ENCODE measurements at regions of chrX and their contacts with region 1.

Region 1: DNA sequence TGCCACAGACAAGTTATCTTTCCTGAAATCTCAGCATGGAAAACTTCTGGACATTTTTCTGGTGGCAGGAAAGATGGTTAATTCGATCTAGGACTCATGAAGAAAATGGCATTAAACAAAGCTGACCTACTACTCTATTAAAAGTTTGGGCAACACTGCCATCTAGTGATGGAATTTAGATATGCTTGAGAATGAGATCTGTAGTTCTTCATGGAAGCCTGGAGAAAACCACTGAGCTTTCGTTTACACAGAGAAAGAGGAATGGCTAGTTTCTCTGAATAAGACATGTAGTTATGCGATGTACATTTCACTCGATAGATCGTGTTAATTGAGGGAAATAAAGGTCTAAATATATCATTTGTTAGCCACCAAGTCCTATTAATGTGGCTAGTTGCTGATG is 51.7 kb upstream of the CHRDL1 start:
- DNase-seq: peak in 3 of 14 experiments; percentile 44 to 61 (median 52)
- ATAC-seq: no peak
- H3K4me3 ChIP-seq: no peak overlapping the region
- H3K4me3 Mint-ChIP-seq: no peak overlapping the region
- H3K27ac ChIP-seq: no peak overlapping the region
- H3K27ac Mint-ChIP-seq: no peak overlapping the region
- H3K4me1 ChIP-seq: no peaks in the 10 kb centered on the region
- H3K4me1 Mint-ChIP-seq: no peaks in the 10 kb centered on the region
- H3K27me3 ChIP-seq: no peaks in the 10 kb centered on the region
- H3K27me3 Mint-ChIP-seq: no peaks in the 10 kb centered on the region
- CTCF ChIP-seq: peak; percentile 60

Region 2: GRCh38 chrX:110156167-110156754 is 691.1 kb before region 1 on chrX:
- CTCF ChIA-PET with region 1: no interaction called
- POLR2A ChIA-PET with region 1: no interaction called
- intact Hi-C with region 1: loop called in 1 of 2 experiments (anchors 5 kb)
- DNase-seq: peak in 3 of 14 experiments; percentile 13 to 40 (median 29)
- ATAC-seq: no peak
- H3K4me3 ChIP-seq: no peak overlapping the region
- H3K4me3 Mint-ChIP-seq: no peak overlapping the region
- H3K27ac ChIP-seq: no peak overlapping the region
- H3K27ac Mint-ChIP-seq: no peak overlapping the region
- H3K4me1 ChIP-seq: peaks cover 6% of the 10 kb centered on the region
- H3K4me1 Mint-ChIP-seq: peaks cover 10% of the 10 kb centered on the region
- H3K27me3 ChIP-seq: no peaks in the 10 kb centered on the region
- H3K27me3 Mint-ChIP-seq: no peaks in the 10 kb centered on the region
- CTCF ChIP-seq: peak; percentile 64

Region 3: DNA sequence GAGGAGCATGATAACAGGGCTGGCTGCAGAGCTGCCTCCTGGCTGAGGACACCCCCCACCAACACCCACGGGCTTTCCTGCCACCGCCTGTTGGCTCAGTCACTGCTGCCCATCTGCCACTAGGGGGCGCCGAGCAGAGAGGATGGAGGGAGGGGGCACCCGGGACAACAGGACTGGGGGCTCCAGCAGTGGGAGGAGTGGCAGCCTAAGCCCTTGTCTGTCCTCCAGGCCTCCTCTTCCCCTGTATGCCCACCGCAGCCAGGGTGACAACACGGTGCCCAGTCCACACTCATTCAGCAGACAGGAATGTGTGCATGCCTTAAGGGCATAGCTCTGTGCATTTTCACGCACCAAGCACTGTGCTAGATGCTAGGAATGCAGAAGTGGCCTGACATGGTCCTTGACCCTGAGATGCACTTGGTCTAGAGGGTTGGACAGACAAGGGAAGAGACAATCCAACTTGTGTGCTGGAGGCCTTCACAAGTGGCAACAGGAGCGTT is 679.3 kb before region 1 on chrX:
- CTCF ChIA-PET with region 1: no interaction called
- POLR2A ChIA-PET with region 1: no interaction called
- intact Hi-C with region 1: loop called in 1 of 2 experiments (anchors 5 kb)
- DNase-seq: peak; percentile 19 to 66 (median 39)
- ATAC-seq: peak; percentile 46
- H3K4me3 ChIP-seq: no peak overlapping the region
- H3K4me3 Mint-ChIP-seq: no peak overlapping the region
- H3K27ac ChIP-seq: no peak overlapping the region
- H3K27ac Mint-ChIP-seq: no peak overlapping the region
- H3K4me1 ChIP-seq: peaks cover 6% of the 10 kb centered on the region
- H3K4me1 Mint-ChIP-seq: peaks cover 5% of the 10 kb centered on the region
- H3K27me3 ChIP-seq: no peaks in the 10 kb centered on the region
- H3K27me3 Mint-ChIP-seq: no peaks in the 10 kb centered on the region
- CTCF ChIP-seq: peak; percentile 51

Region 4: GRCh38 chrX:110450050-110450449 is 397.3 kb before region 1 on chrX:
- CTCF ChIA-PET with region 1: no interaction called
- POLR2A ChIA-PET with region 1: no interaction called
- intact Hi-C with region 1: loop called (anchors 1 kb)
- DNase-seq: peak; percentile 10 to 64 (median 37)
- ATAC-seq: peak; percentile 48
- H3K4me3 ChIP-seq: no peak overlapping the region
- H3K4me3 Mint-ChIP-seq: no peak overlapping the region
- H3K27ac ChIP-seq: no peak overlapping the region
- H3K27ac Mint-ChIP-seq: no peak overlapping the region
- H3K4me1 ChIP-seq: no peaks in the 10 kb centered on the region
- H3K4me1 Mint-ChIP-seq: no peaks in the 10 kb centered on the region
- H3K27me3 ChIP-seq: no peaks in the 10 kb centered on the region
- H3K27me3 Mint-ChIP-seq: peaks cover 9% of the 10 kb centered on the region
- CTCF ChIP-seq: peak; percentile 53

Region 5: GRCh38 chrX:110836982-110837381 is 10.4 kb before region 1 on chrX:
- CTCF ChIA-PET with region 1: interaction called, 11 read pairs
- POLR2A ChIA-PET with region 1: no interaction called
- intact Hi-C with region 1: no loop called
- DNase-seq: no peak
- ATAC-seq: no peak
- H3K4me3 ChIP-seq: no peak overlapping the region
- H3K4me3 Mint-ChIP-seq: no peak overlapping the region
- H3K27ac ChIP-seq: no peak overlapping the region
- H3K27ac Mint-ChIP-seq: no peak overlapping the region
- H3K4me1 ChIP-seq: no peaks in the 10 kb centered on the region
- H3K4me1 Mint-ChIP-seq: no peaks in the 10 kb centered on the region
- H3K27me3 ChIP-seq: no peaks in the 10 kb centered on the region
- H3K27me3 Mint-ChIP-seq: peaks cover 5% of the 10 kb centered on the region
- CTCF ChIP-seq: no peak

Measured in CD4-positive, alpha-beta T cell (primary cell).